ENCODE measurements at regions of chr7 and their contacts with region 1.

Region 1: DNA sequence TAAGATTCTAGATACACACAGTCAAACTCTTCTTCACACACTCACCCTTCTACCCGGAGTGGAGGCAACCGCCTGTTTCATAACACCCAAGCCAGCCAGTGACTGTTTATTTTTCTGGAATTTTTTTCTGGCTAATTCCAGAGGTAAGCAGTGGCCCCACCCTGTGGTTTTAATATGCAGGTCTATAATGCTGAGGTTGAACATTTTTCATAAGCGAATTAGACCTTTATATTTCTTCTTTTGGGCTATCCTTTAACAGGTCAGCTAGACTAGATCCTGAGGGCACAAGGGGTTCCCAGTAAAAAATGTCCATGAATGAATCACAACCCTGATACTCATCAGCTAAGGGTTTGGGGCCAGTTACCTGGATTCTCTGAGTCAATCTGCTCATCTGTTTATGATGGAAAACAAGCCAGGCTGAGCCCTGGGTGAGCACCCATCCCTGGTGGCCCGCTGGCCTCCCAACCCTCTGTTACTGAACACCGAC is 76.2 kb downstream of the GRB10 start:
- DNase-seq: no peak
- ATAC-seq: no peak
- H3K4me3 Mint-ChIP-seq: no peak overlapping the region
- H3K27ac Mint-ChIP-seq: no peak overlapping the region
- H3K4me1 Mint-ChIP-seq: no peaks in the 10 kb centered on the region
- H3K27me3 Mint-ChIP-seq: peaks cover 1% of the 10 kb centered on the region
- CTCF ChIP-seq: no peak

Region 2: GRCh38 chr7:50978633-50979215 is 272.2 kb after region 1 on chr7:
- CTCF ChIA-PET with region 1: no interaction called
- POLR2A ChIA-PET with region 1: no interaction called
- intact Hi-C with region 1: loop called (anchors 5 kb)
- DNase-seq: no peak
- ATAC-seq: no peak
- H3K4me3 Mint-ChIP-seq: no peak overlapping the region
- H3K27ac Mint-ChIP-seq: no peak overlapping the region
- H3K4me1 Mint-ChIP-seq: no peaks in the 10 kb centered on the region
- H3K27me3 Mint-ChIP-seq: peaks cover 5% of the 10 kb centered on the region
- CTCF ChIP-seq: no peak